Posterior vena cava (tissue), 2 donors: ENCODE measurements at regions of chr16 and their contacts with region 1.

Region 1: DNA sequence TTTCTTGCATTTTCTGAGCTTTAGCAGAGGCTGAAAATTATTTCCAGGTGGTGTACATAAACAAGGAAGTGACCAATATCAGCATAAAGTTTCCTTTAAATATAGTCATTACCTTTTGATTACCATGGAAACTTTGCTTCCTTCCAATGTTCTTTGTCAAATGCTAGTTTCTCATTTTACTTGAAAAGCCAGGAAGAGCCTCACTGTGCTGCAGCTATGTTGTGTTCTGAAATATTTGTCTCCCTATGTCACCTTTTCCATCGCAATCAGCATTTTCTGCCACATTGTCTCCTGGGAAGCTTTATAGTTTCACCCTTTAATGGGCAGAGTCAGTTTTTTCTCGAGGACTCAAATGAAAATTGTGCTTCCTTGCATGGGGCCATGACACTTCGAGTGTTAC is 496.0 kb downstream of the CDH8 start:
- DNase-seq: no peak

Region 2: DNA sequence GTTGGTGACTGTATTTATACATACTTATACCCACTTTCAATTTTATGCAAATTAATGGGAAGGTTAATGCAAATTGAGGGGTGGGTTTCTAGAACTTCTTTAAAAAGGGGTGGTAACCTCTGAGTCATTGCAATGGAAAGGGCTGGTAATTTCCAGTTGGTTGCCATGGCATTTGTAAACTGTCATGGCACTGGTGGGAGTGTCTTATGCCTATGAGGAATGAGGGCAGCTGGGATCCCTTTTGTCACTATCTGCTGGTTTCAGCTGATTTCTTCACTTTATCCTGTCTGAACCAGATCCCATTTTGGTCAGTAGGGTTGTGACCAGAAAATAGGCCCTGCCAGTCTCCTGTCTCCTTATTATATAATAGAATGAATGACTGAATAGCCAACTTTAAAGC is 1799.4 kb before region 1 on chr16:
- intact Hi-C with region 1: loop called in 1 of 2 experiments (anchors 5 kb)
- DNase-seq: no peak

Region 3: GRCh38 chr16:61471737-61472136 is 68.5 kb before region 1 on chr16:
- intact Hi-C with region 1: no loop called
- DNase-seq: no peak

Region 4: DNA sequence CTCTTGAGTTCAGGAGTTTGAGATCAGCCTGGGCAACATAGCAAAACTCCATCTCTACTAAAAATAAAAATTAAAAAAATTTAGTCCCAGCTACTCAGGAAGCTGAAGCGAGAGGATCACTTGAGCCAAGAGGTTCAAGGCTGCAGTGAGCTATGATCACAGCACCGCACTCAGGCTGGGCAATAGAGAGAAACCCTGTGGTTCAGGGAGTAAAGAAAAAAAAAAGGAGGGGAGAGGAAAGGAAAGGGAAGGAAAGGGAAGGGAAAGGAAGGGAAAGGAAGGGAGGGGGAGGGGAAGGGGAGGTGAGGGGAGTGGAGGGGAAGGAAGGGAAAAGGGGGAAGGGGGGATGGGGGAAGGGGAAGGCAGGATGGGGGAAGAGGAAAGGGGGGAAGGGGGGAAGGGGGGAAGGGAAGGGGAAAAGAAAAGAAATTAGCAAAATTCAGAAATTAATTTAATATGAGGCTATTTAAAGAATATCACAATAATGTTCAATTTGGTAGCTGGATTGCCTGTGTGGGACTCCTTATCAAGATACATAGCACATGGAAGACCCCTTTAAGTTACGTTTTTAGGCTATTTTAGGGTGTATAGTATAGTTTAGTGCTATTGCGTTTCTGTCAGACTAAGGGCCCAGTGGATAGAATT is 71.8 kb after region 1 on chr16:
- intact Hi-C with region 1: no loop called
- DNase-seq: no peak

Region 5: GRCh38 chr16:61936522-61936921 is 396.3 kb after region 1 on chr16:
- intact Hi-C with region 1: no loop called
- DNase-seq: no peak